ENCODE measurements at regions of chr19 and their contacts with region 1.

Region 1: GRCh38 chr19:38634757-38635482 is 12.5 kb upstream of the ACTN4 start:
- DNase-seq: peak; percentile 72 to 92 (median 89)
- ATAC-seq: peak; percentile 24 to 32
- H3K4me3 ChIP-seq: no peak overlapping the region
- H3K27ac ChIP-seq: peak overlapping the region; percentile 72
- H3K4me1 ChIP-seq: no peaks in the 10 kb centered on the region
- H3K27me3 ChIP-seq: no peaks in the 10 kb centered on the region

Region 2: GRCh38 chr19:38544034-38544958 is 90.6 kb before region 1 on chr19:
- intact Hi-C with region 1: loop called in 1 of 4 experiments (anchors 10 kb)
- DNase-seq: peak; percentile 82 to 90 (median 83)
- ATAC-seq: peak; percentile 86 to 89
- H3K4me3 ChIP-seq: no peak overlapping the region
- H3K27ac ChIP-seq: no peak overlapping the region
- H3K4me1 ChIP-seq: no peaks in the 10 kb centered on the region
- H3K27me3 ChIP-seq: no peaks in the 10 kb centered on the region